HepG2 (cell line): ENCODE measurements at regions of chr4 and their contacts with region 1.

Region 1: GRCh38 chr4:171682725-171683124 is 130.5 kb upstream of the GALNTL6 start:
- DNase-seq: no peak
- ATAC-seq: no peak
- H3K4me3 ChIP-seq: no peak overlapping the region
- H3K27ac ChIP-seq: no peak overlapping the region
- H3K4me1 ChIP-seq: no peaks in the 10 kb centered on the region
- H3K27me3 ChIP-seq: no peaks in the 10 kb centered on the region
- CTCF ChIP-seq: no peak
- EP300 ChIP-seq: no peak
- POLR2A ChIP-seq: no peak
- RAD21 ChIP-seq: no peak

Region 2: DNA sequence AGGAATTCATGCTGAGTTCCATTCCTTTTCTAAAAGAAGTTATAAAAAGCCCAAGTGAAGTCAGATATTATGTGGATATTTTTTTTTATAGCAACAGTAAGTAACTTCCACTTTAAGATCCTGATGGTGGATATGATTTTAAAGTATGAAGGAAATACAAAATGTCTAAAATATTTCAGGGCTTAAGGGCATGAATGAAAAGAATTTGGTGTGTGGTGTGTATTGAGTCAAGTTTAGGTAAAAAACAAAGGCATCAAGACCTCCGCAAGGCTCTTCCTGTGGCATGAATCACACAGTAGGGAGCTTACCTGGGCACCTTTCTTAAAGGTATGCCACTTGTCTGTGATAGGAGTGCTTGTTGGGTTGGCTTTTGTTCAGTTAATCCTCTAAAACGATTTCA is 1330.5 kb before region 1 on chr4:
- CTCF ChIA-PET with region 1: no interaction called
- POLR2A ChIA-PET with region 1: no interaction called
- in situ Hi-C with region 1: no loop called
- intact Hi-C with region 1: loop called (anchors 5 kb)
- DNase-seq: no peak
- ATAC-seq: no peak
- H3K4me3 ChIP-seq: no peak overlapping the region
- H3K27ac ChIP-seq: no peak overlapping the region
- H3K4me1 ChIP-seq: no peaks in the 10 kb centered on the region
- H3K27me3 ChIP-seq: no peaks in the 10 kb centered on the region
- CTCF ChIP-seq: no peak
- EP300 ChIP-seq: no peak
- POLR2A ChIP-seq: no peak
- RAD21 ChIP-seq: no peak

Region 3: GRCh38 chr4:170599894-170600293 is 1082.8 kb before region 1 on chr4:
- CTCF ChIA-PET with region 1: no interaction called
- POLR2A ChIA-PET with region 1: no interaction called
- in situ Hi-C with region 1: no loop called
- intact Hi-C with region 1: no loop called
- DNase-seq: no peak
- ATAC-seq: no peak
- H3K4me3 ChIP-seq: no peak overlapping the region
- H3K27ac ChIP-seq: no peak overlapping the region
- H3K4me1 ChIP-seq: no peaks in the 10 kb centered on the region
- H3K27me3 ChIP-seq: no peaks in the 10 kb centered on the region
- CTCF ChIP-seq: no peak
- EP300 ChIP-seq: no peak
- POLR2A ChIP-seq: no peak
- RAD21 ChIP-seq: no peak

Region 4: GRCh38 chr4:171993247-171993646 is 310.5 kb after region 1 on chr4:
- CTCF ChIA-PET with region 1: no interaction called
- POLR2A ChIA-PET with region 1: no interaction called
- in situ Hi-C with region 1: no loop called
- intact Hi-C with region 1: no loop called
- DNase-seq: no peak
- ATAC-seq: no peak
- H3K4me3 ChIP-seq: no peak overlapping the region
- H3K27ac ChIP-seq: no peak overlapping the region
- H3K4me1 ChIP-seq: no peaks in the 10 kb centered on the region
- H3K27me3 ChIP-seq: no peaks in the 10 kb centered on the region
- CTCF ChIP-seq: no peak
- EP300 ChIP-seq: no peak
- POLR2A ChIP-seq: no peak
- RAD21 ChIP-seq: no peak